Activated CD8-positive, alpha-beta T cell treated with anti-CD3 and anti-CD28 coated beads for 36 hours (primary cell): ENCODE measurements at regions of chr16 and their contacts with region 1.

Region 1: GRCh38 chr16:58487566-58488351 is 12.2 kb upstream of the NDRG4 start:
- DNase-seq: peak; percentile 84
- ATAC-seq: peak; percentile 93
- H3K4me3 Mint-ChIP-seq: no peak overlapping the region
- H3K27ac Mint-ChIP-seq: no peak overlapping the region
- H3K4me1 Mint-ChIP-seq: no peaks in the 10 kb centered on the region
- H3K27me3 Mint-ChIP-seq: peaks cover 2% of the 10 kb centered on the region
- CTCF ChIP-seq: peak; percentile 93

Region 2: GRCh38 chr16:58299757-58300349 is 187.9 kb before region 1 on chr16:
- CTCF ChIA-PET with region 1: interaction called, 13 read pairs
- POLR2A ChIA-PET with region 1: no interaction called
- intact Hi-C with region 1: no loop called
- DNase-seq: peak; percentile 58
- ATAC-seq: no peak
- H3K4me3 Mint-ChIP-seq: no peak overlapping the region
- H3K27ac Mint-ChIP-seq: no peak overlapping the region
- H3K4me1 Mint-ChIP-seq: no peaks in the 10 kb centered on the region
- H3K27me3 Mint-ChIP-seq: peaks cover 6% of the 10 kb centered on the region
- CTCF ChIP-seq: peak; percentile 72

Region 3: GRCh38 chr16:58345574-58346354 is 142.0 kb before region 1 on chr16:
- CTCF ChIA-PET with region 1: interaction called, 12 read pairs
- POLR2A ChIA-PET with region 1: no interaction called
- intact Hi-C with region 1: no loop called
- DNase-seq: no peak
- ATAC-seq: no peak
- H3K4me3 Mint-ChIP-seq: no peak overlapping the region
- H3K27ac Mint-ChIP-seq: no peak overlapping the region
- H3K4me1 Mint-ChIP-seq: no peaks in the 10 kb centered on the region
- H3K27me3 Mint-ChIP-seq: peaks cover 17% of the 10 kb centered on the region
- CTCF ChIP-seq: peak; percentile 41

Region 4: GRCh38 chr16:58392215-58393137 is 95.3 kb before region 1 on chr16 and contains the start of gene GINS3:
- CTCF ChIA-PET with region 1: interaction called, 10 read pairs
- POLR2A ChIA-PET with region 1: no interaction called
- intact Hi-C with region 1: no loop called
- DNase-seq: peak; percentile 93
- ATAC-seq: peak; percentile 97
- H3K4me3 Mint-ChIP-seq: peak within 1 kb of the TSS; percentile 93
- H3K27ac Mint-ChIP-seq: peak within 1 kb of the TSS; percentile 96
- H3K4me1 Mint-ChIP-seq: peaks cover 19% of the 10 kb centered on the region
- H3K27me3 Mint-ChIP-seq: no peaks in the 10 kb centered on the region
- CTCF ChIP-seq: no peak
- total RNA-seq, gene GINS3: 16.0 to 18.1 TPM

Region 5: DNA sequence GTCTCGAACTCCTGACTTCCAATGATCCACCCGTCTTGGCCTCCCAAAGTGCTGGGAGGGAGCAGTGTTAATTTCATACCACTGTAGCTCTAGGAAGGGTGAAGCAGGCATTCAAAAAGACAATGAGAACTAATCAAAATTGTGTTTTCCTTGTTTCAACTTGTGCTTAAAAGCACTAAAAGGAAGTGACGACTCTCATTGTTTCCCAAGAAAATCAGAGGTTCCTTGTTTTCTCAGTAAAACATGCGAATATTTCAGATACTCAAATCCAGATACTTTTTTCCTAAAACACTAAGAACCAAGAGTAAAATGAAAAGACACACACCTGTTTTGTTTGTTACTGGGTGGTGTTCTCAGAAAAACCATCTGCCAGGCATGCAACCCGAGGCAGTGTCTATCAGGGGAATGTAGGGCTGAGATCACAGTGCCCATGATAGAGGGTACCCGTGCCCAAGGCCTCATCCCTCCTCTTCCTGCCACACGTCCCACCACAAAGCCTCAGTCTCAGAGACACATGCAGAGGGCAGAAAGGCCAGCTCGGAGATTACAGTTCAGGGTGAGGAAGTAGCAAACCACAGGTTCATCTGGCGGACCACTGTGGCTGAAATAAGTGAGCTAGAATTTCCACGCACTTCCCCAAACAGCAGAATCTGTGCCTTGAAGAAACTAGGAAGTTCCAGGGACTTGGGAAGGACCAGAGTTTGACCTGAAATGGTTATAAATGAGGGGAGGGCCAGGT is 61.8 kb before region 1 on chr16:
- CTCF ChIA-PET with region 1: no interaction called
- POLR2A ChIA-PET with region 1: no interaction called
- intact Hi-C with region 1: no loop called
- DNase-seq: peak; percentile 72
- ATAC-seq: peak; percentile 91
- H3K4me3 Mint-ChIP-seq: no peak overlapping the region
- H3K27ac Mint-ChIP-seq: no peak overlapping the region
- H3K4me1 Mint-ChIP-seq: peaks cover 17% of the 10 kb centered on the region
- H3K27me3 Mint-ChIP-seq: peaks cover 8% of the 10 kb centered on the region
- CTCF ChIP-seq: no peak